ENCODE measurements at regions of chr14 and their contacts with region 1.

Region 1: DNA sequence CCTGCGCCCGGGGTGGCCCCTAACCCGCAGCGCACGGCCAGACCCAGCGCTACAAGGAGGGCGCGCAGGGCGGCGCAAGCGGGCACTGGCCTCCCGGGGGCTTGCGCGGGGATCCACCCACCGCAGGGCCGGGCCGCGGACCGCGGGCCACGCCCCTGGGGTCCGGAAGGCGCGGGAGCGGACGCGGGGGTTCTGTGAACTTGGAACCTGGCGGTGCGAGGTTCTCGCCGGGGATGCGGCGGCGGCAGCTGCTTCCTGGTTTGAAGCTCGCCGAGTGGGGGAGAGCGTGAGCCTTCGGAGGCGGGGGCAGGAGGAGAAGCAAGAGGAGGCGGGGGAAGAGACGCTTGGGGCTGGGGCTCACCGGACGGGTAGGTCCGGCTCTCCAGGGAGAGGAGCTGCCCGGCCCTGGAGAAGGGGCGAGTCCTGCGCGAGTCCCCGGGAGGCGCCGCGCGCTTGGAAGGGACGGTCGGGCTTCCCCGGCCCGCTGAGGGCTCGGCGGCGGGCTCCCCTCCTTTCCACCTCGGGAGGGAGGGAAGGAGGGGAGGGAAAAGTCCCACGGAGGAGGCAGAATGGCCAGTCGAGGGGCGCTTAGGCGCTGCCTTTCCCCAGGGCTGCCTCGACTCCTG is at the start of gene PRKCH:
- DNase-seq: peak; percentile 67 to 87 (median 84)
- ATAC-seq: peak; percentile 87
- H3K4me3 ChIP-seq: peak within 1 kb of the TSS; percentile 90
- H3K4me3 Mint-ChIP-seq: peak within 1 kb of the TSS in 9 of 10 donors; percentile 95 to 100 (median 98)
- H3K27ac ChIP-seq: peak within 1 kb of the TSS; percentile 91
- H3K27ac Mint-ChIP-seq: peak within 1 kb of the TSS in 8 of 9 donors; percentile 93 to 99 (median 97)
- H3K4me1 ChIP-seq: peaks cover 20 to 22% of the 10 kb centered on the region in 2 donors
- H3K4me1 Mint-ChIP-seq: peaks cover 9 to 26% (median 25%) of the 10 kb centered on the region in 7 donors
- H3K27me3 ChIP-seq: no peaks in the 10 kb centered on the region
- H3K27me3 Mint-ChIP-seq: no peaks in the 10 kb centered on the region
- total RNA-seq, gene PRKCH: 224 to 359 (median 320) TPM

Region 2: GRCh38 chr14:61342486-61342885 is 21.0 kb after region 1 on chr14:
- CTCF ChIA-PET with region 1: interaction called, 8 read pairs
- POLR2A ChIA-PET with region 1: interaction called, 214 read pairs
- intact Hi-C with region 1: loop called (anchors 1 kb)
- DNase-seq: peak; percentile 46 to 91 (median 87)
- ATAC-seq: peak; percentile 76
- H3K4me3 ChIP-seq: peak overlapping the region; percentile 28
- H3K4me3 Mint-ChIP-seq: peak overlapping the region; percentile 76 to 97 (median 82)
- H3K27ac ChIP-seq: peak overlapping the region; percentile 76
- H3K27ac Mint-ChIP-seq: peak overlapping the region in 8 of 9 donors; percentile 92 to 100 (median 98)
- H3K4me1 ChIP-seq: peaks cover 92% of the 10 kb centered on the region in 2 donors
- H3K4me1 Mint-ChIP-seq: peaks cover 18 to 94% (median 82%) of the 10 kb centered on the region in 7 donors
- H3K27me3 ChIP-seq: no peaks in the 10 kb centered on the region
- H3K27me3 Mint-ChIP-seq: no peaks in the 10 kb centered on the region

Region 3: GRCh38 chr14:61388173-61388975 is 66.9 kb after region 1 on chr14:
- CTCF ChIA-PET with region 1: interaction called, 5 read pairs
- POLR2A ChIA-PET with region 1: interaction called, 14 read pairs
- intact Hi-C with region 1: loop called (anchors 1 kb)
- DNase-seq: peak in 6 of 9 donors; percentile 38 to 56 (median 50)
- ATAC-seq: peak; percentile 76
- H3K4me3 ChIP-seq: peak overlapping the region; percentile 50
- H3K4me3 Mint-ChIP-seq: peak overlapping the region in 1 of 10 donors; percentile 74
- H3K27ac ChIP-seq: peak overlapping the region; percentile 71
- H3K27ac Mint-ChIP-seq: no peak overlapping the region
- H3K4me1 ChIP-seq: peaks cover 93 to 96% of the 10 kb centered on the region in 2 donors
- H3K4me1 Mint-ChIP-seq: peaks cover 0 to 46% (median 12%) of the 10 kb centered on the region in 7 donors
- H3K27me3 ChIP-seq: no peaks in the 10 kb centered on the region
- H3K27me3 Mint-ChIP-seq: no peaks in the 10 kb centered on the region

Region 4: GRCh38 chr14:61420326-61420725 is 98.8 kb after region 1 on chr14:
- CTCF ChIA-PET with region 1: no interaction called
- POLR2A ChIA-PET with region 1: interaction called, 10 read pairs
- intact Hi-C with region 1: no loop called
- DNase-seq: peak in 1 of 9 donors; percentile 37
- ATAC-seq: peak; percentile 24
- H3K4me3 ChIP-seq: no peak overlapping the region
- H3K4me3 Mint-ChIP-seq: peak overlapping the region in 8 of 10 donors; percentile 43 to 77 (median 58)
- H3K27ac ChIP-seq: peak overlapping the region; percentile 41
- H3K27ac Mint-ChIP-seq: peak overlapping the region in 6 of 9 donors; percentile 75 to 88 (median 83)
- H3K4me1 ChIP-seq: peaks cover 81 to 83% of the 10 kb centered on the region in 2 donors
- H3K4me1 Mint-ChIP-seq: peaks cover 4 to 90% (median 26%) of the 10 kb centered on the region in 7 donors
- H3K27me3 ChIP-seq: no peaks in the 10 kb centered on the region
- H3K27me3 Mint-ChIP-seq: no peaks in the 10 kb centered on the region

Region 5: GRCh38 chr14:61653507-61653906 is 332.0 kb after region 1 on chr14:
- CTCF ChIA-PET with region 1: no interaction called
- POLR2A ChIA-PET with region 1: no interaction called
- intact Hi-C with region 1: no loop called
- DNase-seq: no peak
- ATAC-seq: no peak
- H3K4me3 ChIP-seq: no peak overlapping the region
- H3K4me3 Mint-ChIP-seq: no peak overlapping the region
- H3K27ac ChIP-seq: no peak overlapping the region
- H3K27ac Mint-ChIP-seq: no peak overlapping the region
- H3K4me1 ChIP-seq: peaks cover 5 to 22% of the 10 kb centered on the region in 2 donors
- H3K4me1 Mint-ChIP-seq: peaks cover 23 to 51% (median 36%) of the 10 kb centered on the region in 7 donors
- H3K27me3 ChIP-seq: no peaks in the 10 kb centered on the region
- H3K27me3 Mint-ChIP-seq: peaks cover 0 to 2% (median 0%) of the 10 kb centered on the region in 5 donors

Region 6: GRCh38 chr14:61694830-61695694 is 373.6 kb after region 1 on chr14 and contains the start of gene HIF1A:
- CTCF ChIA-PET with region 1: no interaction called
- POLR2A ChIA-PET with region 1: interaction called, 3 read pairs
- intact Hi-C with region 1: loop called in 1 of 2 experiments (anchors 5 kb)
- DNase-seq: peak; percentile 83 to 98 (median 96)
- ATAC-seq: peak; percentile 97
- H3K4me3 ChIP-seq: peak within 1 kb of the TSS; percentile 92
- H3K4me3 Mint-ChIP-seq: peak within 1 kb of the TSS; percentile 95 to 99 (median 98)
- H3K27ac ChIP-seq: peak within 1 kb of the TSS; percentile 99
- H3K27ac Mint-ChIP-seq: peak within 1 kb of the TSS; percentile 96 to 99 (median 99)
- H3K4me1 ChIP-seq: peaks cover 9 to 17% of the 10 kb centered on the region in 2 donors
- H3K4me1 Mint-ChIP-seq: peaks cover 36 to 69% (median 62%) of the 10 kb centered on the region in 7 donors
- H3K27me3 ChIP-seq: no peaks in the 10 kb centered on the region
- H3K27me3 Mint-ChIP-seq: peaks cover 0 to 2% (median 0%) of the 10 kb centered on the region in 5 donors
- total RNA-seq, gene HIF1A: 88.8 to 358 (median 143) TPM